ENCODE measurements at regions of chr2 and their contacts with region 1.

Region 1: GRCh38 chr2:134118279-134119116 is 135.4 kb upstream of the MGAT5 start:
- DNase-seq: peak; percentile 94 to 96 (median 96)
- H3K4me3 ChIP-seq: peak overlapping the region in 1 of 7 experiments; percentile 89
- H3K27ac ChIP-seq: no peak overlapping the region
- H3K4me1 ChIP-seq: peaks cover 4 to 39% (median 30%) of the 10 kb centered on the region in 4 experiments
- H3K27me3 ChIP-seq: no peaks in the 10 kb centered on the region

Region 2: GRCh38 chr2:134207564-134208209 is 89.2 kb after region 1 on chr2:
- CTCF ChIA-PET with region 1: interaction called, 124 read pairs
- POLR2A ChIA-PET with region 1: interaction called, 4 read pairs
- DNase-seq: peak; percentile 68 to 81 (median 78)
- H3K4me3 ChIP-seq: no peak overlapping the region
- H3K27ac ChIP-seq: no peak overlapping the region
- H3K4me1 ChIP-seq: peaks cover 3 to 23% (median 8%) of the 10 kb centered on the region in 4 experiments
- H3K27me3 ChIP-seq: no peaks in the 10 kb centered on the region

Region 3: DNA sequence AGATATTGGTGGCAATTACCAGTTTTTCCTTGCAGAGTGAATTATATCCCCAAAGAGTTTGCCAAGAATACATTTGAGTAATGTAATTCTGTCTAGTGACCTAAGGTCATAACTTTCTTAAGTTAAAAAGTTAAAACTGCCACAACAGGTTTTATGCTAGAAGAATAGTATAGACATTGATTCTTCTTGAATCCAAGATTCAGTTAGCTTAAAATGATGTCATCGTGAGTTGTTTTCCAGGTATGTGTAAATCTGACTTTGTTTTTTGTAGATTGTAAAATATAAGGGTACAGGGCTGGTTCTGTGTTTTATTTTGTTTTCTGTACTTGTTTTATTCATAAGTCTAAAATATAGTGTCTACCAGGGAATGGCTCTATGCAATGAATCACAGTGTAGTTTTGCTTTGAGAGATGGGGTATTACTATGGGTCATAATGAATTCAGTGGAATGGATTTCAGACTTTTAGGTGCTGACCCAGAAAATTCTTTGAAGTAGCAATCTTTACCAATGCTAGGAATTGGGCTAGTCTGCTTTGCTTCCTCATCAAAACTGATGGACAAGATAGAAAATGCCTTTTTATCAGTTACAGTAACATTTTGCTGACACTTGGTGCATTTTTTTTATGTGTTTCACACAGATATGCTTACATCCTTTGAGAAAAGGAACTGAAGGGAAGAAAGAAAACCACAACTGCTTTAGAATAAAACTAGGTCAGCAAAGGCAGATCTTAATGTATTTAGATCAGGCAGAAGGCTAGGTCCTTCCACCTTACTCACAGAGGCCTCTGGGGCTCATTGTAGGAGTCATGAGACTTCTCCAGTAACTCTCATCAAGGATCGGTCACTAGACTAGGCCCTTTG is 114.6 kb after region 1 on chr2:
- CTCF ChIA-PET with region 1: interaction called, 13 read pairs
- POLR2A ChIA-PET with region 1: no interaction called
- DNase-seq: peak in 2 of 3 donors; percentile 64 to 77
- H3K4me3 ChIP-seq: peak overlapping the region in 1 of 7 experiments; percentile 26
- H3K27ac ChIP-seq: no peak overlapping the region
- H3K4me1 ChIP-seq: peaks cover 17 to 35% (median 25%) of the 10 kb centered on the region in 4 experiments
- H3K27me3 ChIP-seq: no peaks in the 10 kb centered on the region

Region 4: DNA sequence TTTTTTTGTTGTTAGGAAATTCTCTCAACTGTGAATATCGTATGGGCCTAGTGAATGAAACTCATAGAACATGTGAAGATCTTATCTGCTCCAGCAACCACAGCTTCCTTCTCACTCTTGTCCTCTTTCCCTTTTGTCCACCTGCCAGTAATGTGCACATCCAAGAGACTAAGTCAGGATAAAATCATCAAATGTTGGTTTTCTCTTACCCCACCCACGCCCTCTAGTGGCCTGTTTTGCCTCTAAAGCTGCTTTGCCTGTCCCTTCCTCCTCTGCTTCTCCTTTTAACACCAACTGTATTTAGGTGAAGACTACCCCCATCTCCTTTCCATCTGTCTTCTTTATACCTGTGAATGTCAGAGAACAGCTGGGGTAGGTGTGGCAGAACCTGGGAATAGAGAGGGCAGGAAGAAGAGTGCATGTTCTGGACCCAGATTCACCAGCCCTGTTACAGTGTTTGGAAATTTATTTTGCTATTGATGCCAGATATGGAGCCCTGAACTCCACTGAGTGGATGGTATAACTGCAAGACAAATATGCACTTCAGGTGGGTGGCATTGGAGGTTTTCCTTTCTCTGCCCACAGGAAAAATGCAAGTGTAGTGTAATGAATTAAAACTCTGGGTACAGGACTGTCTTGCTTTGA is 127.0 kb after region 1 on chr2:
- CTCF ChIA-PET with region 1: interaction called, 72 read pairs
- POLR2A ChIA-PET with region 1: no interaction called
- DNase-seq: peak; percentile 78 to 91 (median 90)
- H3K4me3 ChIP-seq: peak overlapping the region in 1 of 7 experiments; percentile 36
- H3K27ac ChIP-seq: no peak overlapping the region
- H3K4me1 ChIP-seq: peaks cover 5 to 23% (median 15%) of the 10 kb centered on the region in 4 experiments
- H3K27me3 ChIP-seq: no peaks in the 10 kb centered on the region

Region 5: GRCh38 chr2:134401081-134401497 is 282.6 kb after region 1 on chr2:
- CTCF ChIA-PET with region 1: interaction called, 10 read pairs
- POLR2A ChIA-PET with region 1: no interaction called
- DNase-seq: no peak
- H3K4me3 ChIP-seq: no peak overlapping the region
- H3K27ac ChIP-seq: no peak overlapping the region
- H3K4me1 ChIP-seq: peaks cover 0 to 5% (median 0%) of the 10 kb centered on the region in 4 experiments
- H3K27me3 ChIP-seq: no peaks in the 10 kb centered on the region

Region 6: DNA sequence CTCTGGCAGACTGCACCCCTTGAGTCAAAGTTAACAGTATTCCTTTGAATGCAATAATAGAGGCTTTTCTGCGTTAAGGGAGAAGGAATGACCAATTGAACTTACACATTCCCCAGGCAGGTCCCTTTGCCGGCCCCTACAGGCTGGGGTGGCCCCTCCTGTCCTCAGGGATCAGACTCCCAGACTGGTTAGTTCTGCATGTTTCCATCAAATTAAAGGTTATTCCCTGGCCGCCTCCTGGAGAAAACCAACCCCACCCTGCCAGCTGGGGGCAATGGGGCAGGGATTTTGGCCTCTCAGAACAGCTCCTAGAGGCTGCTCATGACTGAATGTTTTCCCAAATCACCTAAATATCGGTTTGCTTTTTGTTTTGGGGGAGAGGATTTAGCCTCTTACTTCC is 335.0 kb after region 1 on chr2:
- CTCF ChIA-PET with region 1: interaction called, 18 read pairs
- POLR2A ChIA-PET with region 1: no interaction called
- DNase-seq: no peak
- H3K4me3 ChIP-seq: no peak overlapping the region
- H3K27ac ChIP-seq: no peak overlapping the region
- H3K4me1 ChIP-seq: peaks cover 0 to 3% (median 2%) of the 10 kb centered on the region in 4 experiments
- H3K27me3 ChIP-seq: no peaks in the 10 kb centered on the region

Measured in common myeloid progenitor, CD34-positive (primary cell).